ENCODE measurements at regions of chr5 and their contacts with region 1.

Region 1: GRCh38 chr5:142356716-142357473 is 32.1 kb upstream of the SPRY4 start:
- DNase-seq: peak; percentile 72 to 93 (median 87)
- ATAC-seq: peak; percentile 82
- H3K4me3 ChIP-seq: peak overlapping the region; percentile 53 to 77
- H3K4me3 Mint-ChIP-seq: peak overlapping the region; percentile 86
- H3K27ac ChIP-seq: peak overlapping the region; percentile 40 to 63
- H3K27ac Mint-ChIP-seq: peak overlapping the region; percentile 88
- H3K4me1 ChIP-seq: peaks cover 33% of the 10 kb centered on the region
- H3K4me1 Mint-ChIP-seq: peaks cover 51% of the 10 kb centered on the region
- H3K27me3 ChIP-seq: no peaks in the 10 kb centered on the region
- H3K27me3 Mint-ChIP-seq: no peaks in the 10 kb centered on the region
- CTCF ChIP-seq: no peak

Region 2: GRCh38 chr5:141636413-141637122 is 720.3 kb before region 1 on chr5 and contains the starts of genes HDAC3 and RELL2:
- CTCF ChIA-PET with region 1: no interaction called
- POLR2A ChIA-PET with region 1: no interaction called
- intact Hi-C with region 1: loop called in 1 of 2 experiments (anchors 5 kb)
- DNase-seq: peak; percentile 88 to 97 (median 94)
- ATAC-seq: peak; percentile 89
- H3K4me3 ChIP-seq: peak within 1 kb of the TSS; percentile 98 to 99
- H3K4me3 Mint-ChIP-seq: peak within 1 kb of the TSS; percentile 92
- H3K27ac ChIP-seq: peak within 1 kb of the TSS; percentile 78 to 81
- H3K27ac Mint-ChIP-seq: peak within 1 kb of the TSS; percentile 89
- H3K4me1 ChIP-seq: peaks cover 28% of the 10 kb centered on the region
- H3K4me1 Mint-ChIP-seq: peaks cover 50% of the 10 kb centered on the region
- H3K27me3 ChIP-seq: no peaks in the 10 kb centered on the region
- H3K27me3 Mint-ChIP-seq: no peaks in the 10 kb centered on the region
- CTCF ChIP-seq: no peak
- total RNA-seq, gene HDAC3: 48.9 to 54.8 TPM
- total RNA-seq, gene RELL2: 9.5 to 9.8 TPM

Region 3: DNA sequence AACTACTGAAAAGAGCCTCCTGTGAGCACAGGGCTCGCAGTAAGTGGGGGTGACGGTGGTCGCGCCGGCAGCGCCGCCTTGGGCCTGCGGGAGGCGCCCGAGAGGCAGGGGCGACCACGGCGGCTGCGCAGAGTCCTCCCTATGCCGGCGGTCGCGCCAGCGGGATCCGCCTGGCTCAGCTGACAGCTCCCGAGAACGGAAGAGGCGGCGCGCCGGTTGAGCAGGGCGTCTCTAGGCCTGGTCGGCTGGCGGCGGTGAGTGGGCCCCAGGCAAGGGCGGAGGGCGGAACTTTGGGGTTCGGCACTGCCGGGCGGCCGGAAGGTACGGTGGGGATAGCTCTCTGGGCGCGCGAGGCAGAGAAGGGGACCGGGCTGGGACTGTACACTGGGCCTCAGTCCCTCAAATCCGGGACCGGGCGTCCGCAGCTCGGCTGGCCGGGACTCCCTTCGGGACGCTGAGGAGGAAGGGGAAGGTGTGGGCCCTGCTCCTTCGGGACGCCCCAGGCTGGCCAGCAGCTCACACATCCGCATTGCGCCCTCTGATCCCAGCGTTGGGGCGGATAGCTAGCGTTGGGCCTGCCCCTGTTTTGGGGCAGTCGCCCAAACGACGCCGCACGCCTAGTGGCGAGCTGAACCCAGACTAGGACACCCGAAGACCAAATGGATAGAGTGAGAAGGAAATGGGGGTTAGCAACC is 387.8 kb before region 1 on chr5 and contains the start of gene RNF14:
- CTCF ChIA-PET with region 1: no interaction called
- POLR2A ChIA-PET with region 1: no interaction called
- intact Hi-C with region 1: loop called in 1 of 2 experiments (anchors 1 kb)
- DNase-seq: peak; percentile 86 to 97 (median 92)
- ATAC-seq: peak; percentile 94
- H3K4me3 ChIP-seq: peak within 1 kb of the TSS; percentile 77 to 94
- H3K4me3 Mint-ChIP-seq: peak within 1 kb of the TSS; percentile 98
- H3K27ac ChIP-seq: peak within 1 kb of the TSS; percentile 80 to 97
- H3K27ac Mint-ChIP-seq: peak within 1 kb of the TSS; percentile 99
- H3K4me1 ChIP-seq: peaks cover 18% of the 10 kb centered on the region
- H3K4me1 Mint-ChIP-seq: peaks cover 27% of the 10 kb centered on the region
- H3K27me3 ChIP-seq: no peaks in the 10 kb centered on the region
- H3K27me3 Mint-ChIP-seq: no peaks in the 10 kb centered on the region
- CTCF ChIP-seq: peak; percentile 98
- total RNA-seq, gene RNF14: 11.3 to 12.8 TPM

Region 4: DNA sequence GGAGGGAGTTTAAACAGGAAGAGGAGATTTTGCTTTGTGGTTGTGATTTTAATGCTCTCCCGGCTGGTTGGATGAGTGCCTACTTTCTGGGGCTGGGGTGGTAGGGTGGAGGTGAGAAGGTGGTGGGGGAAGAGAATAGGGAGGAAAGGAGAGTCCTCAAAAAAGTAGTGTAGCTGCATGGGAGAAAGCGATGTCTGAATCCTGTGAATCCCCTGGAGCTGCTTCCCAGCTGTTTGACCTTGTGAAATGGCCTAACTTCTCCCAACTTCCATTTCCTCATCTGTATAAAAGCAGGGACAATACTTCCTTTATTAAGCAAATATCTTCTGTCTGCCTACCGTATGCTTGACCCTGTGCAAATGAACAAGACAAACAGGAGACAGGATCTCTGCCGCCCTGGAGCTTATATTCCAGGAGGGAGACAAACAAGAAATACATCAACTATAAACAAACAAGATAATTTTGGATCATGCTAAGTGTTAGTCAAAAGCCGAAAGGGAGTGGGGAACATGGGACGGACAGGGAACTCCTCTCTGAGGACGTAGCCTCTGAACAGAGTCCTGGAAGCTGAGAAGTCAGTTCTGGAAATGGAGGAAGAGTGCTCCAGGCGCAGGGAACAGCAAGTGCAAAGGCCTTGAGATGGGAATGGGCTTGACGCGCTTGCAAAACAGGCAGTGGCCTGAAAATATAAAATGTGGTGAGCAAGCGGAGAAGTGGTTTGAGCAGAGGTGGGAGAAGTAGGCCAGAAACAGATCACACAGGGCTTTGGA is 135.6 kb before region 1 on chr5:
- CTCF ChIA-PET with region 1: interaction called, 3 read pairs
- POLR2A ChIA-PET with region 1: no interaction called
- intact Hi-C with region 1: loop called (anchors 1 to 2 kb)
- DNase-seq: no peak
- ATAC-seq: no peak
- H3K4me3 ChIP-seq: no peak overlapping the region
- H3K4me3 Mint-ChIP-seq: no peak overlapping the region
- H3K27ac ChIP-seq: no peak overlapping the region
- H3K27ac Mint-ChIP-seq: peak overlapping the region; percentile 18
- H3K4me1 ChIP-seq: peaks cover 27% of the 10 kb centered on the region
- H3K4me1 Mint-ChIP-seq: peaks cover 42% of the 10 kb centered on the region
- H3K27me3 ChIP-seq: peaks cover 0 to 2% of the 10 kb centered on the region in 2 experiments
- H3K27me3 Mint-ChIP-seq: peaks cover 16% of the 10 kb centered on the region
- CTCF ChIP-seq: no peak

Region 5: GRCh38 chr5:142375944-142376411 is 19.1 kb after region 1 on chr5:
- CTCF ChIA-PET with region 1: interaction called, 4 read pairs
- POLR2A ChIA-PET with region 1: no interaction called
- intact Hi-C with region 1: loop called in 1 of 2 experiments (anchors 2 kb)
- DNase-seq: no peak
- ATAC-seq: no peak
- H3K4me3 ChIP-seq: no peak overlapping the region
- H3K4me3 Mint-ChIP-seq: no peak overlapping the region
- H3K27ac ChIP-seq: no peak overlapping the region
- H3K27ac Mint-ChIP-seq: no peak overlapping the region
- H3K4me1 ChIP-seq: no peaks in the 10 kb centered on the region
- H3K4me1 Mint-ChIP-seq: peaks cover 4% of the 10 kb centered on the region
- H3K27me3 ChIP-seq: no peaks in the 10 kb centered on the region
- H3K27me3 Mint-ChIP-seq: no peaks in the 10 kb centered on the region
- CTCF ChIP-seq: no peak

Measured in CD8-positive, alpha-beta T cell (primary cell).